ENCODE measurements at regions of chr11 and their contacts with region 1.

Region 1: DNA sequence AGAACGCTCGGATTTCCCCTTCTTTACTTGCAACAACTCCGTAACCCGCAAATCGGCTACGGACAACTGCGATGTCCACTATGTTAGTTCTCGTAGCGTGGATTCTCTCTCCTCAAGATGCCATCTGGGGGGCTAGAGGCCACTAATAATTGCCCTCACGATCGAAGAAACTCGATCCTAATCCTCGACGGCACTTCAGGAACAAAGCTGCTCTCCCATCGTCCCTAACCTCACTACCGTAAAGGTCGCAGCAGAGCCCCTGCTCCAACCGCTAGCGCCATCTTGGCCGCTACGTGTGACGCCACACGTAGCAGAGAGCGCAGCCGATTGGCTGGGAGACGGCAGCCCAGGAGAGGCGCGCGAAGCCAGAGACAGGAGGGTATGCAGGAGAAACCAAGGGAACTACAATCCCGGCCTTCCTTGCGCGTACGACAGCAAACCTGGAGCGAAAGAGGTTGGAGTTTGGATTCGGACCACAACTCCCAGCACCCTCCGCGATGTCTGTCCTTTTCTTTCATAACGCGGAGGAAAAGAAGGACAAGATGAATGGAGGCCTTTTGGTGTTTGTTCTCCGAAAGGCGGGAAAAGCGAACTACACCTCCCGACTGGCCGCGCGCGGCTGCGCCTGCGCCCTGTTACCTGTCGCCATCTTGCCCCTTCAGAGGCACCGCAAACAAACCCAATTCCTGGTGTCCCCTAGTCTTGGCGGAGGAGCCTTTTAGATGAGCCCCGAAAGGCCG is at the start of gene EMSY:
- DNase-seq: peak; percentile 96
- ATAC-seq: peak; percentile 88
- H3K4me3 ChIP-seq: peak within 1 kb of the TSS; percentile 86 to 96
- H3K27ac ChIP-seq: peak within 1 kb of the TSS; percentile 86
- H3K4me1 ChIP-seq: peaks cover 6 to 10% of the 10 kb centered on the region in 2 experiments
- H3K27me3 ChIP-seq: no peaks in the 10 kb centered on the region
- CTCF ChIP-seq: no peak
- POLR2A ChIP-seq: peak; percentile 95
- RAD21 ChIP-seq: no peak
- total RNA-seq, gene EMSY: 22.7 TPM

Region 2: GRCh38 chr11:76185931-76186401 is 258.6 kb before region 1 on chr11:
- CTCF ChIA-PET with region 1: no interaction called
- POLR2A ChIA-PET with region 1: no interaction called
- RAD21 ChIA-PET with region 1: no interaction called
- intact Hi-C with region 1: no loop called
- DNase-seq: no peak
- ATAC-seq: no peak
- H3K4me3 ChIP-seq: no peak overlapping the region
- H3K27ac ChIP-seq: no peak overlapping the region
- H3K4me1 ChIP-seq: peaks cover 0 to 5% of the 10 kb centered on the region in 2 experiments; a peak in 1 of 4 replicates
- H3K27me3 ChIP-seq: no peaks in the 10 kb centered on the region
- CTCF ChIP-seq: no peak
- POLR2A ChIP-seq: no peak
- RAD21 ChIP-seq: no peak

Region 3: DNA sequence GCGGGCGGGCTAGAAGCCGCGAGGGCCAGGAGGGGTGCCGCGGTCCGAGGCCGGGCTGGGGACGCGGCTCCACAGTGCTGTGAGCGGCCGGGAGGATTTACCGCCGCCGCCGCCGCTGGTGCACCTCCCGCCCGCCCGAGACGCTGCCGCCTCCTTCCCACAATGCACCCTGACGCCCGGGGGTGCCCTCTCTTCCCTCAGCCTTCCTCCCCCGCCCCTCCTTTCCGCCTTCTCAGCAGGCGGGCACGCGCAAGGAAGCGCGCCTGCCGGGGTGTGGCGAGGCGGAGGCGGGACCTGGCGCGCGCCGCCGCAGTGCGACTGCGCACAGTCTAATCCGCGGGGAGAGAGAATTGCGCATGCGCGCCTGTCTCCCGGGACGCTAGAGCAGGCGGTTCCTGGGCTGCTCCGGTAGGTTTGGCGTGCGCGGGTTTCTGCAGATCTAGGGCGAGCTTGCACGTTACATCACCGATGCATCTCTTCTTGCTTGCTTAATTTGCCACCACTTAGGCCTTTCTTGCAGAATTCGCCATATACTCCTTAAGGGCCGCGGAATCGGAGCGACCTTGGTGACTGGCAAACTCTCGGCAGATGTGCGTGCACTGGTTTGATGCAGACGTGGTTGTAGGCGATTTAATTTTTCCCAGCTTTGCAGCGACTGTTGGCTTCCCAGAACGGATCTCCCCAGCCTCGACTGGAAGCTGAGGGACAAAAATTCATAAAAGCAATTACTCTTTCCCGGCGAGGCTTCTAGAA is 63.4 kb before region 1 on chr11 and contains the starts of genes GVQW3 and THAP12:
- CTCF ChIA-PET with region 1: no interaction called
- POLR2A ChIA-PET with region 1: no interaction called
- RAD21 ChIA-PET with region 1: no interaction called
- intact Hi-C with region 1: loop called (anchors 5 kb)
- DNase-seq: peak; percentile 93
- ATAC-seq: peak; percentile 89
- H3K4me3 ChIP-seq: peak within 1 kb of the TSS; percentile 76 to 95
- H3K27ac ChIP-seq: peak within 1 kb of the TSS; percentile 79
- H3K4me1 ChIP-seq: peaks cover 6 to 20% of the 10 kb centered on the region in 2 experiments
- H3K27me3 ChIP-seq: no peaks in the 10 kb centered on the region
- CTCF ChIP-seq: 0 out of 6 replicates have a peak, but pooled peaks of 1 of the 3 experiments have one; percentile 22
- POLR2A ChIP-seq: peak; percentile 91
- RAD21 ChIP-seq: no peak
- total RNA-seq, gene GVQW3: 4.7 TPM
- total RNA-seq, gene THAP12: 44.1 TPM